Activated T-helper 2 cell treated with anti-CD3 and anti-CD28 coated beads, Interferon-gamma antibody, Interleukin-2, Interleukin-4, amounts not matched to agents 10 μg/mL and 5 μg/mL and 100 μg/mL, durations not matched to agents 14 hours and 24 hours and 36 hours (primary cell): ENCODE measurements at regions of chr1 and their contacts with region 1.

Region 1: GRCh38 chr1:207362962-207363858 is 41.7 kb downstream of the CD55 start:
- DNase-seq: no peak
- H3K4me3 Mint-ChIP-seq: no peak overlapping the region
- H3K27ac Mint-ChIP-seq: no peak overlapping the region
- H3K4me1 Mint-ChIP-seq: peaks cover 2% of the 10 kb centered on the region
- H3K27me3 Mint-ChIP-seq: no peaks in the 10 kb centered on the region

Region 2: GRCh38 chr1:207097871-207098324 is 265.3 kb before region 1 on chr1:
- intact Hi-C with region 1: loop called (anchors 1 kb)
- DNase-seq: peak; percentile 19
- H3K4me3 Mint-ChIP-seq: no peak overlapping the region
- H3K27ac Mint-ChIP-seq: peak overlapping the region; percentile 72
- H3K4me1 Mint-ChIP-seq: peaks cover 15% of the 10 kb centered on the region
- H3K27me3 Mint-ChIP-seq: peaks cover 10% of the 10 kb centered on the region

Region 3: DNA sequence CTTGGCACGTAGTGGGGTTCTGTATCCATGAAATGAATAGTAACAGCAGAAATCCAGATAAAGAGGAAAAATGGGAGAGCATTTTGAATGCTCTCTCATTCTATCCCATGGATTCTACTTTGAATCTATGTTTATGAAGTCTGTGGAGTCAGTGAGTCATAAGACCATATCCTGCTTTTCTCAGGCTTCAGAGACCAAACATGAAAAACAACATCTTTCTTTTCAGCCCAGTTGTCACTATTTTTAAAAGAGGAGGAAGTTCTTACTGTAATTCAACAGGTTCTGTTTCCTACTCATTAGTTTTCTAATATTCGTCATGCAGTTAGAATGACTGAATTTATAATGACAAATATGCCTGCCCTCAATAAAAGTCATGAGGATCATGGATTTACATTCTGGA is 81.2 kb before region 1 on chr1:
- intact Hi-C with region 1: no loop called
- DNase-seq: no peak
- H3K4me3 Mint-ChIP-seq: no peak overlapping the region
- H3K27ac Mint-ChIP-seq: no peak overlapping the region
- H3K4me1 Mint-ChIP-seq: peaks cover 25% of the 10 kb centered on the region
- H3K27me3 Mint-ChIP-seq: peaks cover 2% of the 10 kb centered on the region

Region 4: DNA sequence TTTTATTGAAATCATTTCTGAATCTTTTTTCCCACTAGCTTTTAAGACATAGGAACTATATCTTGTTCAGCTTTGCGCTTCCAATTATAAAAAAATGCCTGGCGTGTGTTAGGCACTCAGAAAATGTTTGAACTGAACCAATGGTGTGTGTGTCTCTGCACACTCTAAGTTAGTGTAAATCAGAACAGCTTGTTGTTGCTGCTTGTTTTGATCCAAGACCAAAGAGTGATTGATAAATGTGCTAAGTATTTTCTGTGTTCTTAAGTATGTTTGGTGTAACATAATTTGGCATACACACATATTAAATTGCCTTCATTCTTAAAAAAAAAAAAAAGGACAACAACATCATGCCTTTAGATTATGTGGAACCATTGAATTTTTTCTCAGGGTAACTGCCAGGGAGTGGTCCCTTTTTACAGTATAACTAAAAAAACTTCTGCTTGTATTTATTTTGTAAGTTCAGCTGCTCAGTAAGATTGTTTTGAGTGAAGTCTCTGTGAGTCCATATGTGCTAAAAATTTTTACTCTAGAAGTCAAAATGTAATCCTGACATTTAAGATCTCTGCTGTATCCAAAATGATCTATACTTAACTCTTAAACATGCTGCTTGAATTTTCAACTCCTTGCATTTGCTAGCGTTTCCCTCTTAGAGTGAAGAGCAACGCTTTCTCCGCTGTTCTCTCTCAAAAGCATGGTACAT is 33.0 kb before region 1 on chr1:
- intact Hi-C with region 1: no loop called
- DNase-seq: no peak
- H3K4me3 Mint-ChIP-seq: no peak overlapping the region
- H3K27ac Mint-ChIP-seq: no peak overlapping the region
- H3K4me1 Mint-ChIP-seq: peaks cover 50% of the 10 kb centered on the region
- H3K27me3 Mint-ChIP-seq: no peaks in the 10 kb centered on the region

Region 5: GRCh38 chr1:207345644-207346561 is 17.3 kb before region 1 on chr1:
- intact Hi-C with region 1: loop called (anchors 1 kb)
- DNase-seq: no peak
- H3K4me3 Mint-ChIP-seq: peak overlapping the region; percentile 57
- H3K27ac Mint-ChIP-seq: peak overlapping the region; percentile 76
- H3K4me1 Mint-ChIP-seq: peaks cover 72% of the 10 kb centered on the region
- H3K27me3 Mint-ChIP-seq: no peaks in the 10 kb centered on the region

Region 6: DNA sequence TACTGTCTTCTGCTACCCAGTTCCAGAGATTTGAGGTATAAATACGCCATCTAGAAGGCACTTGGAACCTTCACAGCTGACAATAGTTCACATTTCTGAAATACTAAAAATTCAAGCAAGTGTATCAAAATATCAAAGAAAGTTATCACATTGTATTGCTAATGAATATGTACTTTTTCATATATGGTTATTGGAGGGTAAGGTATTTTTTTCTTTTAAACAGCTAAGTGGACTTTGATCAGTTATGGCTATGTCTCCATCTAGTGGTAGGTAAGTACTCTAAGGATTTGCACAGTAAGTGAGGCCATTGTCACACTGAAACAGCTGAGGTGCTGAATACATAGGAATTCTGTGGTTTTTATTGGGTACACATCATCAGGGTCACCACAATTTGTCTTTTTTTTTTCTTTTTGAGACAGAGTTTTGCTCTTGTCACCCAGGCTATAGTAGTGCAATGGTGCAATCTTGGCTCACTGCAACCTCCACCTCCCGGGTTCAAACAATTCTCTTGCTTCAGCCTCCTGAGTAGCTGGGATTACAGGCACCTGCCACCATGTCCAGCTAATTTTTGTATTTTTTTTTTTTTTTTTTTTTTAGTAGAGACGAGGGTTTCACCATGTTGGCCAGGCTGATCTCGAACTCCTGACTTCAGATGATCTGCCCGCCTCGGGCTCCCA is 41.8 kb after region 1 on chr1:
- intact Hi-C with region 1: loop called (anchors 1 kb)
- DNase-seq: no peak
- H3K4me3 Mint-ChIP-seq: no peak overlapping the region
- H3K27ac Mint-ChIP-seq: no peak overlapping the region
- H3K4me1 Mint-ChIP-seq: peaks cover 18% of the 10 kb centered on the region
- H3K27me3 Mint-ChIP-seq: no peaks in the 10 kb centered on the region

Region 7: DNA sequence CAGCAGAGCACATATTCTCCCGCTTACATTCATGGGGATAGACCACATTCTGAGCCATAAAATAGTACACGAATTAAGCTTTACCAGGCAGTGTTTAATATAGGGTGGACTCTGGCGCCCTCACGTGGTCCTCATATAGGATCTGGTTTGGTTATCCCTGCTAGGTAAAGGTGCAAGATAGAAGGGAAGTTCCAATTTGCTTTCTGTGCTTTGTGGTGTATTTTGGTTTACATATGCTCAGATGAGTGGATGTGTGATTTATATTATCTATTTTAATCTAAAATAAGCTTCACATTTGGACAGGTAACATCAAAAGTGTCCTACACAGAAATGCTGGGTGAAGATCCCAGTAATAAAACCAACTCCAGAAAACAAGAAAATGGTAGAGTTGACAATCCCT is 136.4 kb after region 1 on chr1:
- intact Hi-C with region 1: loop called (anchors 1 kb)
- DNase-seq: peak; percentile 37
- H3K4me3 Mint-ChIP-seq: no peak overlapping the region
- H3K27ac Mint-ChIP-seq: peak overlapping the region; percentile 3
- H3K4me1 Mint-ChIP-seq: peaks cover 21% of the 10 kb centered on the region
- H3K27me3 Mint-ChIP-seq: peaks cover 56% of the 10 kb centered on the region